PC-9 (cell line): ENCODE measurements at regions of chr18 and their contacts with region 1.

Region 1: GRCh38 chr18:7084080-7085075 is 33.2 kb downstream of the LAMA1 start:
- DNase-seq: no peak
- H3K4me3 ChIP-seq: no peak overlapping the region
- H3K27ac ChIP-seq: no peak overlapping the region
- H3K4me1 ChIP-seq: no peaks in the 10 kb centered on the region
- H3K27me3 ChIP-seq: peaks cover 83% of the 10 kb centered on the region
- CTCF ChIP-seq: no peak

Region 2: DNA sequence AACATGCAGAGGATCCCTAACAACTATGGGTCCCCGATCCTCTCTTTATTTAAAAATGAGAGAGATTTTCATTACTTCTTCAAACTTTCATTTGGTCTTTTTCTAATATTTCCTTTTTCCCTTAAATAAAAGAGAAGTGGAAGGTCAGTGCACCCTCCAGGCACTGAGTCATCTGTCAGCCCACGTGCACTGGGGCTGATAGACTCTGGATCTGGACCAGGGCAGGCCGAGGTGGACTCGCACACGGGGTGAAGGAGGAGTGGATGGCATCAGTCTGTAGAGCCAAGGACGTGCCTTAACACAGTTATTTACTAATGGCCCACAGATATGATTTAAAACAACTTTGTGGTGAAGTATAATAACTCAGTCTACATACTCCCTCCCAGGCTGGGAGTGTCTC is 974.6 kb before region 1 on chr18:
- CTCF ChIA-PET with region 1: no interaction called
- POLR2A ChIA-PET with region 1: interaction called, 17 read pairs
- intact Hi-C with region 1: no loop called
- DNase-seq: no peak
- H3K4me3 ChIP-seq: no peak overlapping the region
- H3K27ac ChIP-seq: no peak overlapping the region
- H3K4me1 ChIP-seq: no peaks in the 10 kb centered on the region
- H3K27me3 ChIP-seq: peaks cover 2% of the 10 kb centered on the region; the same call in 1 of the 2 replicates
- CTCF ChIP-seq: no peak

Region 3: DNA sequence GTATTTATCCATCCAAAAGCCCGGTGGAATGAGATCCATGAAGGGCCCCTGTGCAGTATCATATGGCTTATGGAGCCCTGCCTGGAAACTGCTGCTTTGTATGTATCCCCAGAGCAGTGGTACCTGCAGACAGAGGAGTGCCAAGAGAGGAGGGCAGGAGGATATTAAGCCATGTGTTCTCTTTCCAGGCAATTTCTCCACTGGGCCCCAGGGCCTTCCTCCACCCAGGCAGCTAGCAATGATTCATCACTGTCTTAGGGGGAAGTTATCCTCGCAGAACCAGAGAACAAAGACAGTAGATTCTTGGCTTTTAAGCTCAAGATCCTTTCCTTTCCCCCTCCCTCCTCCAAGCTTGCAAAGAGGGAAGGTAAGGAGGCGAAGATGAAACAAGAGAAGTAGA is 244.6 kb after region 1 on chr18:
- CTCF ChIA-PET with region 1: no interaction called
- POLR2A ChIA-PET with region 1: no interaction called
- intact Hi-C with region 1: no loop called
- DNase-seq: peak in 1 of 2 experiments; percentile 14
- H3K4me3 ChIP-seq: no peak overlapping the region
- H3K27ac ChIP-seq: no peak overlapping the region
- H3K4me1 ChIP-seq: no peaks in the 10 kb centered on the region
- H3K27me3 ChIP-seq: peaks cover 32% of the 10 kb centered on the region
- CTCF ChIP-seq: no peak